ENCODE measurements at regions of chr22 and their contacts with region 1.

Region 1: GRCh38 chr22:40636380-40637182 is at the start of gene MRTFA:
- DNase-seq: peak; percentile 99
- ATAC-seq: peak; percentile 90
- H3K4me3 ChIP-seq: peak within 1 kb of the TSS; percentile 81 to 99 (median 96)
- H3K4me3 Mint-ChIP-seq: peak within 1 kb of the TSS; percentile 98
- H3K27ac ChIP-seq: peak within 1 kb of the TSS; percentile 84 to 92
- H3K27ac Mint-ChIP-seq: peak within 1 kb of the TSS; percentile 97
- H3K4me1 ChIP-seq: peaks cover 24 to 30% of the 10 kb centered on the region in 2 donors
- H3K4me1 Mint-ChIP-seq: peaks cover 39% of the 10 kb centered on the region
- H3K27me3 ChIP-seq: no peaks in the 10 kb centered on the region
- H3K27me3 Mint-ChIP-seq: no peaks in the 10 kb centered on the region
- CTCF ChIP-seq: no peak
- total RNA-seq, gene MRTFA: 82.6 and 87.6 TPM in 2 replicates

Region 2: DNA sequence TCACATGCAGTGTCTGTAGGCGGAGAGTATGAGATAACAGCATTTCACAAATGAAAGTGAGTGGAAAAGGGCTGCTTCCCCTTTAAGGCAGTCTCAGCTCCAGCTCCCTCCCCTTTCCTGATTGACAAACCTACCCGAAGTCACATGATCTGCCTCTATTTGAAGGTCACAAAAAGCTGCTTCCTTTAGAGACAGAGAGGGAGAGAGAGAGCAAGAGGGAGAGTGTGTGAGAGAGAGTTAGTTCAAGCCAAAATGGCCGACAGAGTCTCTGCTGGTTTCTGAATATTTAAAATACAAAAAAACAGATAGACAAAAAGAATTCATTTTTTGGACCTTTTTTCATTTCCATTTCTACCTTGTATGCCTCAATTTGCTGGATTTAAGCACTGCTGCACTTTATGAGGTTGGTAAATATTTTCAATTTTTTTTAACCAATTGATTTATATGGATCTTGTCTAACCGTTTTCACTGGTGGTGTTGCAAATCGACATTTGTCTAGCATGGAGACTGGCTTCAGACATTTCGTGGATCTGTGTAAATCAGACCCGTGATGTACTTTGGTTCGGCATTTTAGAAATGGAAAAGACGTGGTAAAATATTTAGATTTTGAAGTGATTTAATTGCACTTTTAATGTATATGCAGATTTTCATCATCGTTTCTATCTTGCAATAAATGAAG is 458.7 kb before region 1 on chr22 and contains the start of gene TNRC6B:
- CTCF ChIA-PET with region 1: no interaction called
- POLR2A ChIA-PET with region 1: no interaction called
- intact Hi-C with region 1: loop called (anchors 1 kb)
- DNase-seq: peak; percentile 93
- ATAC-seq: peak; percentile 90
- H3K4me3 ChIP-seq: peak within 1 kb of the TSS; percentile 56 to 100 (median 72)
- H3K4me3 Mint-ChIP-seq: peak within 1 kb of the TSS; percentile 84
- H3K27ac ChIP-seq: peak within 1 kb of the TSS; percentile 65 to 79
- H3K27ac Mint-ChIP-seq: peak within 1 kb of the TSS; percentile 84
- H3K4me1 ChIP-seq: peaks cover 41 to 42% of the 10 kb centered on the region in 2 donors
- H3K4me1 Mint-ChIP-seq: peaks cover 61% of the 10 kb centered on the region
- H3K27me3 ChIP-seq: no peaks in the 10 kb centered on the region
- H3K27me3 Mint-ChIP-seq: no peaks in the 10 kb centered on the region
- CTCF ChIP-seq: no peak
- total RNA-seq, gene TNRC6B: 210 and 248 TPM in 2 replicates

Region 3: DNA sequence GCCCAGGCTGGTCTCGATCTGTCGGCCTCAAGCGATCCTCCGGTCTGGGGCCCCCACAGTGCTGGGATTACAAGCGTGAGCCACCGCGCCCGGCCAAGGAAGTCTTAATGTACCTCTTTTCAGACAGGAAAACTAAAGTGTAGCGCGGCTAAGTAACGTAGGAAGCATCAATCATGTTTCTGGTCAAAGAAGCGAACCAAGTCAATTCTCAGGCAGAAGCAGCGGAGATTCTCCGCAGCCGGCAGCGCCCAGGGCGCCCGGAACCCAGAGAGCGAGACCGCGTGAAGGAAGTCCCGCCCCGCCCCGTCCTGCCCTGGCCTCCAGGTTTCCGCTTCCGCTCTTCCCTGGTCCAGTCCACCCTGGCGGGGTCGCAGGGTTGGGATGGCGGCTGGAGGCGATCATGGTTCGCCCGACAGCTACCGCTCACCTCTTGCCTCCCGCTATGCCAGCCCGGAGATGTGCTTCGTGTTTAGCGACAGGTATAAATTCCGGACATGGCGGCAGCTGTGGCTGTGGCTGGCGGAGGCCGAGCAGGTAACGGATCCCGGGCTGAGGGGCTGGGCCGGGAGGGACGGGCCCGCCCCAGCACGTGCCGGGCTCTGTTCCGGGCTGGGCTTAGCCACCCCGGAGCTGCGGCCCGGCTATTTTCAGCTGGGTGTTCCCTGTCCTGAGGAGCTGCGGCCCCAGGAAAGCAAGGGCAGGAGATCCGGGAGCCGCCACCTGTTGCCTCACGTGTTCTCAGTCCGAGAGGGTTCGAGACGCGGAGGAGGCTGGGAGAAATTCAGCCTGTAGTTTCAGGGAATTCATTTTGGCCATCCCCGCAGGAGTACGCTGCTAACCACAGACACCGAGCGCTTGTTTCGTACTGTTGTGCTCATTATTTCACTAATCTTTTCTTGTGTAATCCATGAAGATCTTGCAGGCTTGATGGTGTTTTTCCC is 290.1 kb before region 1 on chr22 and contains the start of gene ADSL:
- CTCF ChIA-PET with region 1: no interaction called
- POLR2A ChIA-PET with region 1: interaction called, 3 read pairs
- intact Hi-C with region 1: loop called (anchors 1 kb)
- DNase-seq: peak; percentile 91
- ATAC-seq: peak; percentile 89
- H3K4me3 ChIP-seq: peak within 1 kb of the TSS; percentile 84 to 92 (median 88)
- H3K4me3 Mint-ChIP-seq: peak within 1 kb of the TSS; percentile 98
- H3K27ac ChIP-seq: peak within 1 kb of the TSS; percentile 74 to 75
- H3K27ac Mint-ChIP-seq: peak within 1 kb of the TSS; percentile 97
- H3K4me1 ChIP-seq: peaks cover 11 to 27% of the 10 kb centered on the region in 2 donors
- H3K4me1 Mint-ChIP-seq: peaks cover 32% of the 10 kb centered on the region
- H3K27me3 ChIP-seq: no peaks in the 10 kb centered on the region
- H3K27me3 Mint-ChIP-seq: no peaks in the 10 kb centered on the region
- CTCF ChIP-seq: no peak
- total RNA-seq, gene ADSL: 56.3 and 63.8 TPM in 2 replicates

Region 4: DNA sequence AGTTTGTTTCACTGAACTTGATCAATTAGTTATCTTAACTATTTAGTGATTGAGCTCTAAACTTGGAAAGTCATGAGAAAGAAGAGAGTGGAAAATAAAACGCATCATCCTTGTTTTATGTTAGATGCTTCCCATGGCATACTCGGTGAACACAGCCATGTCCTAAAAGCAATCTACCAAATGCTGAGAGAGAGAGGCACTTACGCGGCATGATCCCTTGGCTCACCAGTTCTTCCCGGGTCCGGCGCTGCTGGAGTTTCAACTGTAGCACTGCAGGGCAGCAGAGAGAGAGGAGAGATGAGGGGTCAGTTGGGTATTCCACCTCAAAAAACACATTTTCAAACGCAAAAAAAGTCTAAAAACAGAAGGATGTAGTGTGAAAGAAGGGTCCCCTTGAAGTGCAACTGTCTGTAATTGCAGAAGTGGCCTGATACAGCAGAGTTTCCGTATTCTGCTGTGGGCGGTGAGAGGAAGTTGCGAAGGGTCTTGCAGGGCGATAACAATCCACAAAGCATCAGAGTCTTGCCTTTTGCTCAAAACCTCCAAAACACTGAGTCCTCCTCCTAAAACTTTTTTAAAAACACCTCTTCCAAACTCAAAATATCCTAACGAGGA is 173.5 kb before region 1 on chr22:
- CTCF ChIA-PET with region 1: no interaction called
- POLR2A ChIA-PET with region 1: interaction called, 11 read pairs
- intact Hi-C with region 1: no loop called
- DNase-seq: peak; percentile 77
- ATAC-seq: peak; percentile 88
- H3K4me3 ChIP-seq: peak overlapping the region; percentile 73 to 99 (median 80)
- H3K4me3 Mint-ChIP-seq: peak overlapping the region; percentile 97
- H3K27ac ChIP-seq: peak overlapping the region; percentile 81 to 89
- H3K27ac Mint-ChIP-seq: peak overlapping the region; percentile 98
- H3K4me1 ChIP-seq: peaks cover 36 to 43% of the 10 kb centered on the region in 2 donors
- H3K4me1 Mint-ChIP-seq: peaks cover 55% of the 10 kb centered on the region
- H3K27me3 ChIP-seq: no peaks in the 10 kb centered on the region
- H3K27me3 Mint-ChIP-seq: no peaks in the 10 kb centered on the region
- CTCF ChIP-seq: no peak

Region 5: GRCh38 chr22:40525249-40525884 is 111.2 kb before region 1 on chr22:
- CTCF ChIA-PET with region 1: interaction called, 113 read pairs
- POLR2A ChIA-PET with region 1: no interaction called
- intact Hi-C with region 1: no loop called
- DNase-seq: peak; percentile 68
- ATAC-seq: peak; percentile 63
- H3K4me3 ChIP-seq: no peak overlapping the region
- H3K4me3 Mint-ChIP-seq: no peak overlapping the region
- H3K27ac ChIP-seq: no peak overlapping the region
- H3K27ac Mint-ChIP-seq: no peak overlapping the region
- H3K4me1 ChIP-seq: peaks cover 7% of the 10 kb centered on the region in 2 donors
- H3K4me1 Mint-ChIP-seq: peaks cover 19% of the 10 kb centered on the region
- H3K27me3 ChIP-seq: no peaks in the 10 kb centered on the region
- H3K27me3 Mint-ChIP-seq: no peaks in the 10 kb centered on the region
- CTCF ChIP-seq: peak; percentile 89

Region 6: DNA sequence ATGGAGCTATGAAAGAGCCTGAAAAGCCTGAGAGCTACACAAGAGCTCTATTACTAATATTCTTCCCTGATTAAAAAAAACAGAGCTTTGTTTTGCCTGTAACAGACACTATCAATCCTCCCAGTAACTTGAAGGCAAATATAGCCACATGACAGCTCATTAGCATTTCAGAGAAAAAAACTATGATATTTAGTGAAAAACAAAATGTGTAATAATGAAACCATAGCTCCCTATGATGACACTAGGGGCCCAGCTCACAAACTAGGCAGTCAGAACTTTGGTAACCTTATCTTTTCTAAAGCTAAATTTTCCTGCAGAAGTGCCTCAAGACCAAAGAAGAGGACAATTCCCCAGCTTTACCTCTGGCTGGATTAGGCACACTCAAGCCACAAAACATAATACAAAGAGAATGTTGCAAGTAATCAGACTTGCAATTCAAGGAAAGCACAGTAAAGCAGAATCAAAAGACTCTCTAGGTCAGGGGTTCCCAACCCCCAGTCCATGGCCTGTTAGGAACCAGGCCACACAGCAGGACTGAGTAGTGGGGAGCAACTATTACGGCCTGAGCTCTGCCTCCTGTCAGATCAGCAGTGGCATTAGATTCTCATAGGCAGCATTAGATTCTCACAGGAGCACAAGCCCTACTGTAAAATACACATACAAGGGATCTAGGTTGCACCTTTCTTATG is 53.4 kb before region 1 on chr22:
- CTCF ChIA-PET with region 1: no interaction called
- POLR2A ChIA-PET with region 1: no interaction called
- intact Hi-C with region 1: no loop called
- DNase-seq: no peak
- ATAC-seq: no peak
- H3K4me3 ChIP-seq: no peak overlapping the region
- H3K4me3 Mint-ChIP-seq: no peak overlapping the region
- H3K27ac ChIP-seq: no peak overlapping the region
- H3K27ac Mint-ChIP-seq: no peak overlapping the region
- H3K4me1 ChIP-seq: no peaks in the 10 kb centered on the region
- H3K4me1 Mint-ChIP-seq: peaks cover 16% of the 10 kb centered on the region
- H3K27me3 ChIP-seq: no peaks in the 10 kb centered on the region
- H3K27me3 Mint-ChIP-seq: no peaks in the 10 kb centered on the region
- CTCF ChIP-seq: no peak

Region 7: GRCh38 chr22:40856513-40857308 is 220.1 kb after region 1 on chr22 and contains the starts of genes ST13 and XPNPEP3:
- CTCF ChIA-PET with region 1: no interaction called
- POLR2A ChIA-PET with region 1: no interaction called
- intact Hi-C with region 1: loop called (anchors 1 kb)
- DNase-seq: peak; percentile 98
- ATAC-seq: peak; percentile 88
- H3K4me3 ChIP-seq: peak within 1 kb of the TSS; percentile 82 to 98 (median 94)
- H3K4me3 Mint-ChIP-seq: peak within 1 kb of the TSS; percentile 97
- H3K27ac ChIP-seq: peak within 1 kb of the TSS; percentile 91 to 94
- H3K27ac Mint-ChIP-seq: peak within 1 kb of the TSS; percentile 100
- H3K4me1 ChIP-seq: peaks cover 24 to 28% of the 10 kb centered on the region in 2 donors
- H3K4me1 Mint-ChIP-seq: peaks cover 46% of the 10 kb centered on the region
- H3K27me3 ChIP-seq: no peaks in the 10 kb centered on the region
- H3K27me3 Mint-ChIP-seq: no peaks in the 10 kb centered on the region
- CTCF ChIP-seq: peak; percentile 71
- total RNA-seq, gene ST13: 175 and 187 TPM in 2 replicates
- total RNA-seq, gene XPNPEP3: 18.9 and 24.2 TPM in 2 replicates

Region 8: GRCh38 chr22:41532908-41533825 is 896.6 kb after region 1 on chr22:
- CTCF ChIA-PET with region 1: no interaction called
- POLR2A ChIA-PET with region 1: no interaction called
- intact Hi-C with region 1: no loop called
- DNase-seq: peak; percentile 73
- ATAC-seq: peak; percentile 72
- H3K4me3 ChIP-seq: no peak overlapping the region
- H3K4me3 Mint-ChIP-seq: no peak overlapping the region
- H3K27ac ChIP-seq: no peak overlapping the region
- H3K27ac Mint-ChIP-seq: no peak overlapping the region
- H3K4me1 ChIP-seq: no peaks in the 10 kb centered on the region
- H3K4me1 Mint-ChIP-seq: no peaks in the 10 kb centered on the region
- H3K27me3 ChIP-seq: no peaks in the 10 kb centered on the region
- H3K27me3 Mint-ChIP-seq: no peaks in the 10 kb centered on the region
- CTCF ChIP-seq: peak; percentile 74